WTC11 (cell line): ENCODE measurements at regions of chr1 and their contacts with region 1.

Region 1: DNA sequence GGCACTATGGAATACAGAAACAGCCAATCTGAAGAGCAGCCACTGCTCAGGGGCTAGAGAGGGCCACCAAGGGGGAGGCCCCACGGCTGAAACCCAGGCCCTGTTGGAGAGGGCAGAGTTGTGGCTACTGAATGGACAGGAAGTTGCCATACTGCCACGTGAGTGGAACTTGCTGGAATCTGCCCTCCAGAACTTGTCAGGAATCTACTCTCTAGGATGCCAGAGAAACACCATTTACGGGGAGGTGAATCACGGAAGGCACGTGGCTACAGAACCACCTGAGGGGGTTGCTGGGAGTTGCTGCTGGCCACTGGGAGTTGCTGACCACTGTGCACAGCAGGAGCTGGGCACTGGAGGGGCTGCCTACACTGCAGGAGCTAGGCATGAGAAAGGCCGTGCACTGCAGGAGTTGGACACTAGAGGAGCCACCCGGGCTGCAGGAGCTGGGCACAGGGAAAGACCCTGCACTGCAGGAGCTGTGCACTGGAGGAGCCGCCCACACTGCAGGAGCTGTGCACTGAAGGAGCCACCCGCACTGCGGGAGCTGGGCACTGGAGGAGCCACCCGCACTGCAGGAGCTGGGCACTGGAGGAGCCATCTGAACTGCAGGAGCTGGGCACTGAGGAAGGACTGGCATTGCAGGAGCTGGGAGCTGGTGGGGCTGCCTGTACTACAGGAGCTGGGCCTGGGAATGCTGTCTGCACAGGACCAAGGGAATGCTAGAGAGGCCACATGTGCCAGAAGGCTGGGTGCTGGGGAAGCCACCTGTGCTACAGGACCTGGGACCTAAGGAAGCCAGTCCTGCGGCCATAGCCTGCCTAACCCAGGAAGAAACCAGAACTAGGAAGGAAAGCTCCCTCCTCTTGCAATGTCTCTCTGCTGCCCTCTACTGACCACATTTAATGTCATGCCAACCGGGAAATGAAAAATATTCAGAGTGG is 343.4 kb downstream of the MATN1 start:
- DNase-seq: peak; percentile 50
- ATAC-seq: peak; percentile 85
- H3K4me3 Mint-ChIP-seq: no peak overlapping the region
- H3K27ac Mint-ChIP-seq: no peak overlapping the region
- H3K4me1 Mint-ChIP-seq: no peaks in the 10 kb centered on the region
- H3K27me3 Mint-ChIP-seq: no peaks in the 10 kb centered on the region; the same call in 1 of the 2 replicates
- CTCF ChIP-seq: peak; percentile 66

Region 2: GRCh38 chr1:30232288-30232899 is 147.6 kb before region 1 on chr1:
- CTCF ChIA-PET with region 1: interaction called, 11 read pairs
- POLR2A ChIA-PET with region 1: no interaction called
- DNase-seq: peak; percentile 38
- ATAC-seq: peak; percentile 80
- H3K4me3 Mint-ChIP-seq: no peak overlapping the region
- H3K27ac Mint-ChIP-seq: no peak overlapping the region
- H3K4me1 Mint-ChIP-seq: no peaks in the 10 kb centered on the region
- H3K27me3 Mint-ChIP-seq: no peaks in the 10 kb centered on the region; the same call in 1 of the 2 replicates
- CTCF ChIP-seq: peak; percentile 79

Region 3: DNA sequence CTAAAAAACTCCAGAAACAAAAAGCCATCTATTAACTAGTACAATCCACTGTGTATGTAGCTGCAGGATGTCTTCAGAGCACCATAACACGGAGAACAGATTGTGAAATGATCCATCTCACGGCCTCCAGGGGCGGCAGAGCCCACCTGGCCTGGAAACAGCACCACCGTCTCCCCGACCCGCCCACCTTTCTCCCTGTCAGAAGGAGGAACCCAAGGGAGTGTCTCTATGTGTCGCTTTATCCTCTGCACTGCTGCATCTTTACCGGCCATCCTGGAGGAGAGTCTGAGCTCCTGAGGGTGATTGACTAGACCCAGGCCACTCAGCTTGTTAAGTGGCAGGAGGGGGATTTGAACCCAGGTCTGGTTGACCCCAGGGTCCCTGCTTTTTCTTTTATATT is 61.5 kb before region 1 on chr1:
- CTCF ChIA-PET with region 1: interaction called, 14 read pairs
- POLR2A ChIA-PET with region 1: no interaction called
- DNase-seq: no peak
- ATAC-seq: peak; percentile 61
- H3K4me3 Mint-ChIP-seq: no peak overlapping the region
- H3K27ac Mint-ChIP-seq: no peak overlapping the region
- H3K4me1 Mint-ChIP-seq: peaks cover 3% of the 10 kb centered on the region; the same call in 1 of the 2 replicates
- H3K27me3 Mint-ChIP-seq: no peaks in the 10 kb centered on the region
- CTCF ChIP-seq: no peak

Region 4: GRCh38 chr1:30342535-30343141 is 37.3 kb before region 1 on chr1:
- CTCF ChIA-PET with region 1: interaction called, 13 read pairs
- POLR2A ChIA-PET with region 1: no interaction called
- DNase-seq: peak; percentile 40
- ATAC-seq: peak; percentile 95
- H3K4me3 Mint-ChIP-seq: peak overlapping the region; percentile 44
- H3K27ac Mint-ChIP-seq: no peak overlapping the region
- H3K4me1 Mint-ChIP-seq: peaks cover 14% of the 10 kb centered on the region
- H3K27me3 Mint-ChIP-seq: no peaks in the 10 kb centered on the region
- CTCF ChIP-seq: no peak

Region 5: GRCh38 chr1:30399026-30399425 is 19.1 kb after region 1 on chr1:
- CTCF ChIA-PET with region 1: interaction called, 18 read pairs
- POLR2A ChIA-PET with region 1: no interaction called
- DNase-seq: no peak
- ATAC-seq: no peak
- H3K4me3 Mint-ChIP-seq: no peak overlapping the region
- H3K27ac Mint-ChIP-seq: no peak overlapping the region
- H3K4me1 Mint-ChIP-seq: no peaks in the 10 kb centered on the region
- H3K27me3 Mint-ChIP-seq: peaks cover 3% of the 10 kb centered on the region; the same call in 1 of the 2 replicates
- CTCF ChIP-seq: no peak

Region 6: GRCh38 chr1:30427545-30427944 is 47.6 kb after region 1 on chr1:
- CTCF ChIA-PET with region 1: interaction called, 17 read pairs
- POLR2A ChIA-PET with region 1: no interaction called
- DNase-seq: no peak
- ATAC-seq: peak; percentile 76
- H3K4me3 Mint-ChIP-seq: no peak overlapping the region
- H3K27ac Mint-ChIP-seq: no peak overlapping the region
- H3K4me1 Mint-ChIP-seq: peaks cover 2% of the 10 kb centered on the region; the same call in 1 of the 2 replicates
- H3K27me3 Mint-ChIP-seq: peaks cover 12% of the 10 kb centered on the region
- CTCF ChIP-seq: no peak

Region 7: GRCh38 chr1:30586671-30587070 is 206.7 kb after region 1 on chr1:
- CTCF ChIA-PET with region 1: no interaction called
- POLR2A ChIA-PET with region 1: no interaction called
- DNase-seq: no peak
- ATAC-seq: no peak
- H3K4me3 Mint-ChIP-seq: no peak overlapping the region
- H3K27ac Mint-ChIP-seq: no peak overlapping the region
- H3K4me1 Mint-ChIP-seq: peaks cover 5% of the 10 kb centered on the region; the same call in 1 of the 2 replicates
- H3K27me3 Mint-ChIP-seq: peaks cover 28% of the 10 kb centered on the region
- CTCF ChIP-seq: no peak